Vagina (tissue), 2 donors: ENCODE measurements at regions of chr20 and their contacts with region 1.

Region 1: GRCh38 chr20:40962730-40963504 is 65.7 kb upstream of the TOP1 start:
- DNase-seq: peak; percentile 85 to 96
- H3K4me3 ChIP-seq: no peak overlapping the region
- H3K27ac ChIP-seq: no peak overlapping the region
- H3K4me1 ChIP-seq: peaks cover 6% of the 10 kb centered on the region
- H3K27me3 ChIP-seq: no peaks in the 10 kb centered on the region
- CTCF ChIP-seq: peak; percentile 78 to 85 (median 78)
- POLR2A ChIP-seq: no peak

Region 2: DNA sequence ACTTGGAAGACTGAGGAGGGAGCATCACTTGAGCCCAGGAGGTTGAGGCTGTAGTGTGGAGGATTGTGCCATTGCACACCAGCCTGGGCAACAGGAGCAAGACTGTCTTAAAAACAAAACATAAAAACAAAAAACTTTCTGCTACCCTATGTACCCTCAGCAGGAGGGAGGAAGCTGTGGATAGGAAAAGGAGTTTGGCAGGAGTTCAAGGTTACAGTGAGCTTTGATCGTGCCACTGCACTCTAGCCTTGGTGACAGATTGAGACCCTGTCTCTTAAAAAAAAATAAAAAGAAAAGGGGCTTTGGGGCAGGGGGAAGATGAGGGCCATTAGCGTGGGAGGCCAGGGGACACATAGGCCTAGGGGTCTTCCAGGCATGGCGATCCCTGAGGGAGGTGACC is 1865.0 kb before region 1 on chr20:
- intact Hi-C with region 1: loop called (anchors 5 kb)
- DNase-seq: no peak
- H3K4me3 ChIP-seq: no peak overlapping the region
- H3K27ac ChIP-seq: no peak overlapping the region
- H3K4me1 ChIP-seq: no peaks in the 10 kb centered on the region
- H3K27me3 ChIP-seq: no peaks in the 10 kb centered on the region
- CTCF ChIP-seq: no peak
- POLR2A ChIP-seq: no peak

Region 3: DNA sequence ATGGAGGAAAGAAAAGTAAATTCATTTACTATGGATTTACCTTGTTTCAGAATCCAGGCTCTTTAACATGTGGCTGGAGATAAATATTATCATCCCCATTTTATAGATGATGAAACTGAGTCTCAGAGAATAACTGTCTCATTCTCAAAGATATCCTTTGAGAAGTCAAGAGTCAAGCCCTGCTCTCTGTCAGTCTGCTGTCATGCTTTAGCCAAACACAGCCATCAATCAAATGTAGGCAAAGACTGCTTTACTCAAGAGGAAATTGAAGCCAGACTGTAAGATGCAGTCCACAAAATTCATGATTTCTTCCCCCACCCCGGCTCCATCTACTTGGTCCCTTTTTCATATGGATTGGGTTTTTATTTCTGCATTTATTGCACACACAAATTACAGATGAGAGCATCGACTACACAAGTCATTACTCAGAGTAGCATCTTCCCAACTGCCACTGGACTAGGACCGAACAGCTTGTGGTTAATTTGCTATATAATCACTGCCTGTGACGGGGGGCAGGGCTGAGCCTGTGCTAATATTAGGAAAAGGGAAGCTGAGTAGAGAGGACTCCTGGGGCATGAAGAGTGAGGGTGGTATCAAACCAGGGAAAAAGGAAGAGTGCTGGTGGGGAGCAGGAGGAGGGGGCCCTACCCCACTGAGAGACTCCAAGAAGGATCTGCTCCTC is 36.9 kb before region 1 on chr20:
- intact Hi-C with region 1: no loop called
- DNase-seq: no peak
- H3K4me3 ChIP-seq: no peak overlapping the region
- H3K27ac ChIP-seq: no peak overlapping the region
- H3K4me1 ChIP-seq: no peaks in the 10 kb centered on the region
- H3K27me3 ChIP-seq: no peaks in the 10 kb centered on the region
- CTCF ChIP-seq: no peak
- POLR2A ChIP-seq: no peak